ENCODE measurements at regions of chr14 and their contacts with region 1.

Region 1: DNA sequence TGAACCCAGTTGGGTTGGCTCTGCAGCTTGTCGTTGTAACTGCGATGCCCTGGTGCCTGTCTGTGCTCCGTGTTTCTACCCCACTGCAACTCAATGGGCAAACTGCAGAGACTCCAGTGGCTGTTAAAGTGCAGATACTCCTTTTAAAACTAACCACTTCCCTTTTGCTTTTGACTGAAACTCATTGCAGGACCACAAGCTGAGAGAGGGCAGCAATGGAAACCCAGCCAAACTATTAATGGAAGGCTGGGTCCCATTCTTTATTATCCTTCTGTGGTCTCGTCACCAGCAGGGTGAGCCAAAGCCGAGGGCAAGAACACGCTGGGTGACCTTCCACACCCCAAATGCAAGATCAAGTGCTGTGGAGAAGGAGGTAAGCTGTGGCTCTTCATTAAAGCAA is 910.4 kb downstream of the VRK1 start:
- DNase-seq: peak; percentile 60
- H3K4me3 Mint-ChIP-seq: no peak overlapping the region
- H3K27ac Mint-ChIP-seq: no peak overlapping the region
- H3K4me1 Mint-ChIP-seq: peaks cover 90% of the 10 kb centered on the region
- H3K27me3 Mint-ChIP-seq: no peaks in the 10 kb centered on the region

Region 2: DNA sequence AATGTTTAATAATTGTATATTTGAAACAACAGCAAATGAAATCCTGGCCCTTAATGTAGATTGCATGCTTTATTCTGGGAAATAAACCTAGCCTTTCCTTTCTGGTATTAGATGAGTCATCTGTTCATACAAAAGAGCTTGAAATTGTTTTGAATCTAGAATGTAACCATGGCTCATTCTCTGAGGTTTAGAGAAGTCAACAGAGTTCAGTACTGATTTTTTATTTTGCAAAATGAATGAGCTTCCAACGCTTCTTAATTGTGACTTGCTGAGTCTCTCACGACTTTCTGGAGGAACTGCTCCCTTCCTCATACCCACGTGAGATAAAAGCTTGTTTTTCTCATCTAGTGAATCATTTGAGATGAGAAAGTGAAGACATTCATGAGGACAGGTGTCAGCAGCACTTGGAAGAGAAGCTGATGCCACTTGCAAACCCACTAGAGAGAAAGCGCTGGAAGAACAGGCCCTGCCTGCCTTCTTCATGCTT is 400.8 kb before region 1 on chr14:
- CTCF ChIA-PET with region 1: no interaction called
- POLR2A ChIA-PET with region 1: no interaction called
- intact Hi-C with region 1: loop called (anchors 5 kb)
- DNase-seq: peak; percentile 39
- H3K4me3 Mint-ChIP-seq: no peak overlapping the region
- H3K27ac Mint-ChIP-seq: peak overlapping the region; percentile 92
- H3K4me1 Mint-ChIP-seq: peaks cover 29% of the 10 kb centered on the region
- H3K27me3 Mint-ChIP-seq: no peaks in the 10 kb centered on the region

Region 3: DNA sequence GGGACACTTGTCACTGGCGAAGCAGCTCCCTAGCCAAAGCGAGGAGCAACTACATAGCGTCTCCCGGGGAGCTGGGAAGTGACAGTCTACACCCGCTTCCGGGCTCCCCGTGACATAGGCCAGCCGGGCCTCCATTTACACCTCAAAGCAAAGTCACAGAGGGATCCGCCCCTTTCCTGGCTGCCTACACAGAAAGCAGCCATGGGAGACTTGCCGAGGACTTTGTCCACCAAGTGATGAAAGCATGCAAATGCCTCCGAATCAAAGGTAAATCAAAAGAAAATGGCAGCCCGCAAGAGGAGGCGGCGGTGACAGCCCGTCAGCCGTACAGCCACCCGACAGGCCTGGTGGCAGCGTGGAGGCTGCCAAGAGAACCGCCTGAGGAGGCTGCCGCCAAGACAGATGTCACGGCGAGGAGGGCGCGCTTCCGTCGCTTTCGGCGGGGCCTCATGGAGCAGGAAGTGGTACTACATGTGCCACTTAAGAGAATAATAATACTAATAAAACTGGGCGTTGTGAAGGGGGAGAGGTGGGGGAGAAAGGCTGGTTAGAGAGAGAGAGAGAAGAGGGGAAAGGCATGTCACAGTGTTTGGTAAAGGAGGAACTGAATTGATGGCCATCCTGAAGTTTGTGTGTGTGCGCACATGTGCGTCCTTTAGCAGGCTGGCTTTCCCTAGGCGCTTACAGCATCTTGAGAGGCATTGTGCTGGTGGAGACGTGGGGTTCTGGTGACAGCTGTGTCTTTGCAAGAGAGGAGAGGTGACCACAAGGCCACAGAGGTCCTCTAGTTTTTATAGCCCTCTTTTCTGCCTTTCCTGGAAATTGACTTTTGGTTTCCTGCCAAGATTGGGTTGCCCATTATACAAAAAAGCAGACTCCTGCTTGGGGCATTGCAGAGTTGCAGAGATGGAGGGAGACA is 248.7 kb before region 1 on chr14:
- CTCF ChIA-PET with region 1: no interaction called
- POLR2A ChIA-PET with region 1: no interaction called
- intact Hi-C with region 1: loop called (anchors 5 kb)
- DNase-seq: peak; percentile 90
- H3K4me3 Mint-ChIP-seq: peak overlapping the region; percentile 96
- H3K27ac Mint-ChIP-seq: peak overlapping the region; percentile 100
- H3K4me1 Mint-ChIP-seq: peaks cover 50% of the 10 kb centered on the region
- H3K27me3 Mint-ChIP-seq: no peaks in the 10 kb centered on the region

Region 4: GRCh38 chr14:97536421-97536820 is 171.2 kb before region 1 on chr14:
- CTCF ChIA-PET with region 1: no interaction called
- POLR2A ChIA-PET with region 1: no interaction called
- intact Hi-C with region 1: no loop called
- DNase-seq: no peak
- H3K4me3 Mint-ChIP-seq: no peak overlapping the region
- H3K27ac Mint-ChIP-seq: no peak overlapping the region
- H3K4me1 Mint-ChIP-seq: peaks cover 12% of the 10 kb centered on the region
- H3K27me3 Mint-ChIP-seq: no peaks in the 10 kb centered on the region

Region 5: GRCh38 chr14:97620066-97620465 is 87.5 kb before region 1 on chr14:
- CTCF ChIA-PET with region 1: no interaction called
- POLR2A ChIA-PET with region 1: no interaction called
- intact Hi-C with region 1: loop called (anchors 2 kb)
- DNase-seq: no peak
- H3K4me3 Mint-ChIP-seq: peak overlapping the region; percentile 65
- H3K27ac Mint-ChIP-seq: peak overlapping the region; percentile 80
- H3K4me1 Mint-ChIP-seq: peaks cover 45% of the 10 kb centered on the region
- H3K27me3 Mint-ChIP-seq: no peaks in the 10 kb centered on the region

Region 6: DNA sequence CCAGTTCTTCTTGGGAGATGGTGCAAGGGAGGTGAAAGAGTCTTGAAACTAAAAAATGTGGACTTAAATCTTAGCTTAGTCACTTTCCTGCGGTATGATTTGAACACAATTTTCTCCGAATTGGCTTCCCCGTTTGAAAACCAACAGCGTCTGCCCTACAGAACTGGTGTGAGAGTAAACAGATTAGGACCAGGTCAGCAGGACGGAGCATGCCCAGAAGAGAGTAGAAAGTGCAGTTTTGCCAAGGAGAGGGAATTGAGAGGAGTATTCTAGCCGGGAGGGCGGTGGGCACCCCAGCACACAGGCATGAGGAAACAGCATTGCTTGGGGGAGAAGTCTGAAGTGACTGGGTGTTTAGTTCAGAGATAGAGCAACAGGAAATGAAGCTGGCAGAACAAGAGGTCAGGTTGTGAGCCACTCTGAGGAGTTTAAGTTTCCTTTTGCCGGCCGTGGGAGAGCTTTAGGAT is 16.7 kb after region 1 on chr14:
- CTCF ChIA-PET with region 1: no interaction called
- POLR2A ChIA-PET with region 1: no interaction called
- intact Hi-C with region 1: loop called (anchors 2 kb)
- DNase-seq: peak; percentile 58
- H3K4me3 Mint-ChIP-seq: peak overlapping the region; percentile 71
- H3K27ac Mint-ChIP-seq: peak overlapping the region; percentile 92
- H3K4me1 Mint-ChIP-seq: peaks cover 49% of the 10 kb centered on the region
- H3K27me3 Mint-ChIP-seq: no peaks in the 10 kb centered on the region

Region 7: GRCh38 chr14:97820781-97821180 is 113.2 kb after region 1 on chr14:
- CTCF ChIA-PET with region 1: no interaction called
- POLR2A ChIA-PET with region 1: no interaction called
- intact Hi-C with region 1: no loop called
- DNase-seq: no peak
- H3K4me3 Mint-ChIP-seq: no peak overlapping the region
- H3K27ac Mint-ChIP-seq: no peak overlapping the region
- H3K4me1 Mint-ChIP-seq: peaks cover 8% of the 10 kb centered on the region
- H3K27me3 Mint-ChIP-seq: no peaks in the 10 kb centered on the region

Region 8: DNA sequence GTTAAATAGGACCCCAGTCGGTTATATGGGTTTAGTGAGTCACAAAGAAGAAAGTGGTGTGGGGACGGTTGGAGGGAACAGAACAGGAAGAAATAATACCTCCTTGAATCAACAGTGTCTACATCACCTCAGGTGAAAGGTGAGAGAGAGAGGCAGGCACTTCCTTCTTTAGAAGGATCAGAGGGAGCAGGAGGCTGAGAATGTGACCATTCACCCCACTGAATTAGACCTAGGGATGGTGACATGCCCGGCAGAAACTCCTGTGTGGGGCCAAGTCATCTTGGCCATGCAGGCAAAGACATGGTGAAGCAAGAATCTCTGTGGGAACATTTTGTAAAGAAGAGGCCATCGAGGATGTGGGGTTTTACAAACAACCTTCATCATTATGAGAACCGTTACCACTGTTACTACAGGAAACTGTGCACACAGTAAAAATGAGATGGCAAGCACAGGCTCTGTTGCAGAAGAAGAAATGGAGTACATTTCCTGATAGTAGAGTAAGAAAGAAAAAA is 286.5 kb after region 1 on chr14:
- CTCF ChIA-PET with region 1: no interaction called
- POLR2A ChIA-PET with region 1: no interaction called
- intact Hi-C with region 1: loop called (anchors 5 kb)
- DNase-seq: peak; percentile 59
- H3K4me3 Mint-ChIP-seq: peak overlapping the region; percentile 34
- H3K27ac Mint-ChIP-seq: peak overlapping the region; percentile 94
- H3K4me1 Mint-ChIP-seq: peaks cover 55% of the 10 kb centered on the region
- H3K27me3 Mint-ChIP-seq: no peaks in the 10 kb centered on the region

Region 9: DNA sequence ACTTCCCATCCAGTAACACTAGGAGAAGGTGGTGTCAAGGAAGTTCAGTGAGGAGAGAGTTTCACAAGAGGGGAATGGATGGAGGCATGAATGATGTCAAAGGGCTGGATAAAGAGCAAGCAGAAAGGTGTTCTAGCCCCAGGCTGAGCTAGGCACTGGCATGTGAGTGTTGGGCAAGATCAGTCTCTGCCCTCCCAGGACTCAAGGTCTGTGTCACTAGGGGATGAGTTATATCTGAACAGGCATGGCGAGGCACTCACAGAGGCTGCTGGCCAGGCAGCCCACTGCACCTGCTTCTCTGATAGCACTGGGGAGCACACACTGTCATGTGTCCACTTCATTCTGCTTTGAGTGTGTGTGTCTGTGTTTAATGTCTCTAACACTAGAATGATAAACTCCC is 660.6 kb after region 1 on chr14:
- CTCF ChIA-PET with region 1: no interaction called
- POLR2A ChIA-PET with region 1: no interaction called
- intact Hi-C with region 1: no loop called
- DNase-seq: peak; percentile 12
- H3K4me3 Mint-ChIP-seq: no peak overlapping the region
- H3K27ac Mint-ChIP-seq: no peak overlapping the region
- H3K4me1 Mint-ChIP-seq: peaks cover 15% of the 10 kb centered on the region
- H3K27me3 Mint-ChIP-seq: no peaks in the 10 kb centered on the region

Region 10: DNA sequence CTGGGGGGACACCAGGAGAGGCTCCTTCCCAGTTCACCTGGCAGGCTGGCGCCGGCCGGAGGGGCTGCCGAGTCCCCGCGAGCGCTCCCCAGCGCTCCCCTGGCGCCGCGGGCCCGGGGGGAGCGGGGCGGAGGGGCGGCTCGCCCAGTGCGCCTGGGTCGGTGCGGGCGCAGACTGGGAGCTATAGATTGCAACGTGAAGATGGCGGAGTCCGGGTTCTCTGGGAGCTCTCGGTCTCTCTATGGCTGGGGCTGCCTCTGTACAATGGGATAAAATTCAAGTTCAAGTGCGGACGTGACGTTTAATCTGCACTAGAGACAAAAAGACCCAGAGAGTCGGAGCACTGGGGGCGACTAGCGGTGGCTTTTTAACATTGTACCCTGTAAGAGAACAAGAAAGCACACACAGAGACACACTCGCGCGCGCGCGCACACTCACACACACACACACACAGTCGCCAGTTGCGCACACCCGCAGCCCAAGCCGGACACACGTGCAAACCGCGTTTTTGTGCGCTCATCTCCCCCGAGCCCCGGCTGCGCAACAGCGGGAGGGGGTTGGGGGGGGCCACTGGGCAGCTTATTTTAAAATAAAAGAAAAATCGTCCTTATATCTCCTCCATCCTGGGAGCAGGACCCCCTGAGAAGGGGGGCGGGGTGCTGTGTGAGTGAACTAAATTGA is 1564.5 kb after region 1 on chr14 and contains the start of gene BCL11B:
- CTCF ChIA-PET with region 1: no interaction called
- POLR2A ChIA-PET with region 1: no interaction called
- intact Hi-C with region 1: loop called (anchors 5 kb)
- DNase-seq: peak; percentile 95
- H3K4me3 Mint-ChIP-seq: peak within 1 kb of the TSS; percentile 96
- H3K27ac Mint-ChIP-seq: peak within 1 kb of the TSS; percentile 100
- H3K4me1 Mint-ChIP-seq: peaks cover 29% of the 10 kb centered on the region
- H3K27me3 Mint-ChIP-seq: peaks cover 3% of the 10 kb centered on the region
- total RNA-seq, gene BCL11B: 48.9 to 49.1 TPM